ENCODE measurements at regions of chr2 and their contacts with region 1.

Region 1: GRCh38 chr2:79041032-79041448 is 15.5 kb downstream of the REG3G start:
- DNase-seq: no peak
- ATAC-seq: peak; percentile 92
- H3K4me3 Mint-ChIP-seq: no peak overlapping the region
- H3K27ac Mint-ChIP-seq: no peak overlapping the region
- H3K4me1 Mint-ChIP-seq: peaks cover 6% of the 10 kb centered on the region
- H3K27me3 Mint-ChIP-seq: no peaks in the 10 kb centered on the region
- CTCF ChIP-seq: peak; percentile 54

Region 2: GRCh38 chr2:78839259-78839658 is 201.8 kb before region 1 on chr2:
- CTCF ChIA-PET with region 1: no interaction called
- POLR2A ChIA-PET with region 1: no interaction called
- DNase-seq: no peak
- ATAC-seq: peak; percentile 93
- H3K4me3 Mint-ChIP-seq: peak overlapping the region; percentile 29
- H3K27ac Mint-ChIP-seq: no peak overlapping the region; the same call in 1 of the 2 replicates
- H3K4me1 Mint-ChIP-seq: peaks cover 22% of the 10 kb centered on the region
- H3K27me3 Mint-ChIP-seq: peaks cover 93% of the 10 kb centered on the region
- CTCF ChIP-seq: no peak

Region 3: GRCh38 chr2:78876316-78876688 is 164.7 kb before region 1 on chr2:
- CTCF ChIA-PET with region 1: no interaction called
- POLR2A ChIA-PET with region 1: no interaction called
- DNase-seq: no peak
- ATAC-seq: no peak
- H3K4me3 Mint-ChIP-seq: no peak overlapping the region
- H3K27ac Mint-ChIP-seq: no peak overlapping the region
- H3K4me1 Mint-ChIP-seq: no peaks in the 10 kb centered on the region
- H3K27me3 Mint-ChIP-seq: no peaks in the 10 kb centered on the region
- CTCF ChIP-seq: no peak

Region 4: DNA sequence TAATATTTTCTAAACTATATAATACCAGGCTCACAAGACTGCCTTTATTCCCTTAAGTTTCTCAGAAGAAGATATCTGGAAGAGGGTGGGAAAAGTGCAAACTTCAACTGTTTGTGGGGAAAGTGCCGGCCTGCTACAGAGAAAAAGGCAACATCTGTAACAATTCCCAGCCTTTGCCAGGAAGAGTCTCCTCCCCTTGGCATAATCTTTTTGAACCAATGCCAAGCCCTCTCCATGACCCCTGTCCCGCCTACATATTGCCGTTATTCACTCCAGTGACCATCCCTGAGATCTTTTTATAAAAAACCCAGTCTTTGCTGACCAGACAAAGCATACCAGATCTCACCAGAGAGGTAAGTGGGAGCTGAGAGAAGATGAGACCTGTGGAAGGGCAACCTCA is 15.6 kb before region 1 on chr2 and contains the start of gene REG3G:
- CTCF ChIA-PET with region 1: interaction called, 23 read pairs
- POLR2A ChIA-PET with region 1: no interaction called
- DNase-seq: no peak
- ATAC-seq: no peak
- H3K4me3 Mint-ChIP-seq: no peak within 1 kb of the TSS
- H3K27ac Mint-ChIP-seq: no peak within 1 kb of the TSS
- H3K4me1 Mint-ChIP-seq: peaks cover 6% of the 10 kb centered on the region
- H3K27me3 Mint-ChIP-seq: no peaks in the 10 kb centered on the region; the same call in 1 of the 2 replicates
- CTCF ChIP-seq: no peak
- total RNA-seq, gene REG3G: 0.20 to 0.39 TPM (median 0.30 TPM) in 3 replicates

Region 5: DNA sequence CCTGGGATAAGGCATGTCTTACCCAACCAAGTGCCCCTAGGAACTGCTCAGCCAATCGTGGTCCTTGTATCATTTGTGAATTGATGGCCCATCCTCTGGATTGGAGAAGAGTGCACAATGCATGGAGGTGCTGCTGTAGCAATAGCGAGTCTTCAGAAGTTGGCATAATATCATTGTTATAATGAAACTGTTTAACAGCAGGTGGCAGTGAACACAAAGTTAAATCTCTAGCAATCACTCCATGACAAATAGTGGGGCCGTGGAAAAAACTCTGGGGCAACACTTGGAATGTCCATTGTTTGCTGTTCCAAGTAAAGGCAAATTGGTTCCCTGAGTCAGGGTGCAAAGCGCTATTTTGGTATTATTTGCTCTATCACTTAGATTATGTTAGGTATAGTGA is 90.6 kb after region 1 on chr2:
- CTCF ChIA-PET with region 1: interaction called, 10 read pairs
- POLR2A ChIA-PET with region 1: no interaction called
- DNase-seq: no peak
- ATAC-seq: no peak
- H3K4me3 Mint-ChIP-seq: no peak overlapping the region
- H3K27ac Mint-ChIP-seq: no peak overlapping the region
- H3K4me1 Mint-ChIP-seq: 0 out of 2 replicates have a peak, but pooled peaks cover 3% of the 10 kb centered on the region
- H3K27me3 Mint-ChIP-seq: no peaks in the 10 kb centered on the region
- CTCF ChIP-seq: no peak

Region 6: DNA sequence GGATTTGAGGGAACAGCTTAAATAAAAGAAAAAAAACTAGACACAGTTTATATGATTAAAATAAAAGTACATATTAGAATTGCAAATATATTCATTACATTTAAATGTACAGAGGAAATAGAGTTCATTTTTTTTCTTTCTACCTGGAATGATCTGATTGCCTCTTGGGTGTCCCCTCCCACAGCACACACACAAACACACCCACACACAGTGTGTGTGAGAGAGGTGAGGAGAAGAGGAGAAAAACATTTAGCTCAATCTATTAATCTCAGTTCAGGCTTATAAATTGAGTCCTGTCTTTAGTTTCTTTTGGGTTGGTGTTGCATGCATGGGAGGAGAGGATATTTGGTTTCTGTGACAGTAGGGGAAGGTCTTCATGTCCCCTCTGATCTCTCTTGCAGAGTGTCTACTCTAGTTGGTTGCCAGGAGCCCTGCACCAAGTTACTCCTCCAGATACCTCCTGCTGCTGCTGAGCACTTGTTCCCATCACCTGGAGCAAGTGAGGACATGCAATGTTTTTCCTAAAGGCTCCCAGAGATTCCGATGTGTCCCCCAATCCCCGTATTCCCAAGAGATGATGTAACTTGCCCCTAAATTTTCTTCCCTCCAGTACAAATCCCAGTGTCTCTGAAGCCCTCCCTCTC is 169.4 kb after region 1 on chr2:
- CTCF ChIA-PET with region 1: interaction called, 23 read pairs
- POLR2A ChIA-PET with region 1: no interaction called
- DNase-seq: no peak
- ATAC-seq: no peak
- H3K4me3 Mint-ChIP-seq: no peak overlapping the region
- H3K27ac Mint-ChIP-seq: peak overlapping the region; percentile 59; the same call in 1 of the 2 replicates
- H3K4me1 Mint-ChIP-seq: peaks cover 31% of the 10 kb centered on the region
- H3K27me3 Mint-ChIP-seq: no peaks in the 10 kb centered on the region
- CTCF ChIP-seq: no peak

Region 7: GRCh38 chr2:79275197-79275596 is 234.2 kb after region 1 on chr2:
- CTCF ChIA-PET with region 1: interaction called, 13 read pairs
- POLR2A ChIA-PET with region 1: no interaction called
- DNase-seq: no peak
- ATAC-seq: peak; percentile 46; the same call in 1 of the 2 replicates
- H3K4me3 Mint-ChIP-seq: no peak overlapping the region
- H3K27ac Mint-ChIP-seq: no peak overlapping the region
- H3K4me1 Mint-ChIP-seq: peaks cover 29% of the 10 kb centered on the region
- H3K27me3 Mint-ChIP-seq: no peaks in the 10 kb centered on the region; the same call in 1 of the 2 replicates
- CTCF ChIP-seq: peak; percentile 34; the same call in 1 of the 2 replicates

Measured in WTC11 (cell line).